Psoas muscle (tissue), 8 donors: ENCODE measurements at regions of chr1 and their contacts with region 1.

Region 1: DNA sequence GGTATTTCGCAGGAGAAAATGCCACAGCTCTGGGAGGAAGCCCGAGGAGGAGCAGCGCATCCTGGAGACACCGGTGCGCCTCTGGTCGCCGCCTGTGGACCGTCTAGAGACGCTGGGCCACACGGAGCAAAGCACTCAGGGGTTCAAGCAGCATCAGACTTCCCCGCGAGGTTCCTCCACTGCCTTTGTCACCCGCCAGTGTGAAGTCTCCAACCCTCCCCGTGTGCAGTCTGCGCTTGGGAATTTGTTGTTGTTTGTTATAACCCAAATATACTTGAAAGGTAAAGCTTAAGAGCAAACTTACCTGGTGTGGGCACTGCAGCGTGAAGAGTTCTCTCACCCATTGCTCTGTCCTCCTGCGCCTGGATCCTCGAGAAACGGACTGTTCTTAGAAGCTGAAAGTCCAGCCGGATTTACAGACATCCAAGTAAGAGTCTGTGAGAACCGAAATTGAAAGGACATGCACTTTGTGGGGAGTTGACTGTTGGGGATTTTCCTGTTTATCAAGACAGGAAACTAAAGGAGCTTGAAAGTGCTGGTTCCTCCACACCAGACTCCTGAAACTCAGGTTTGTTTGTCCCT is at the start of gene GBP4:
- DNase-seq: peak; percentile 35 to 60
- ATAC-seq: peak in 3 of 4 donors; percentile 20 to 54 (median 53)
- H3K4me3 ChIP-seq: peak within 1 kb of the TSS; percentile 63
- H3K27ac ChIP-seq: peak within 1 kb of the TSS; percentile 36
- H3K4me1 ChIP-seq: no peaks in the 10 kb centered on the region
- H3K27me3 ChIP-seq: no peaks in the 10 kb centered on the region
- CTCF ChIP-seq: no peak
- total RNA-seq, gene GBP4: 2.2 to 9.7 (median 3.4) TPM

Region 2: DNA sequence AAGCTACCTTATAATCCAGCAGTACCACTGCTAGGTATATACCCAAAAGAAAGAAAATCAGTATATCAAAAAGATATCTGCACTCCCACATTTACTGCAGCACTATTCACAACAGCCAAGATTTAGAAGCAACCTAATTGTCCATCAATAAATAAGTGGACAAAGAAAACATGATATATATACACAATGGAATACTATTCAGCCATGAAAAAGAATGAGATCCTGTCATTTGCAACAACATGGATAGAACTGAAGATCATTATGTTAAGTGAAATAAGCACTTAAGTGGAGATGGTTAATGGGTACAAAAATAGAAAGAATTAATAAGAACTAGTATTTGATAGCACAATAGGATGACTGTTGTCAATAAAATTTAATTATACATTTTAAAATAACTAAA is 605.2 kb before region 1 on chr1:
- intact Hi-C with region 1: no loop called
- DNase-seq: no peak
- ATAC-seq: no peak
- H3K4me3 ChIP-seq: no peak overlapping the region
- H3K27ac ChIP-seq: no peak overlapping the region
- H3K4me1 ChIP-seq: no peaks in the 10 kb centered on the region
- H3K27me3 ChIP-seq: no peaks in the 10 kb centered on the region
- CTCF ChIP-seq: no peak

Region 3: DNA sequence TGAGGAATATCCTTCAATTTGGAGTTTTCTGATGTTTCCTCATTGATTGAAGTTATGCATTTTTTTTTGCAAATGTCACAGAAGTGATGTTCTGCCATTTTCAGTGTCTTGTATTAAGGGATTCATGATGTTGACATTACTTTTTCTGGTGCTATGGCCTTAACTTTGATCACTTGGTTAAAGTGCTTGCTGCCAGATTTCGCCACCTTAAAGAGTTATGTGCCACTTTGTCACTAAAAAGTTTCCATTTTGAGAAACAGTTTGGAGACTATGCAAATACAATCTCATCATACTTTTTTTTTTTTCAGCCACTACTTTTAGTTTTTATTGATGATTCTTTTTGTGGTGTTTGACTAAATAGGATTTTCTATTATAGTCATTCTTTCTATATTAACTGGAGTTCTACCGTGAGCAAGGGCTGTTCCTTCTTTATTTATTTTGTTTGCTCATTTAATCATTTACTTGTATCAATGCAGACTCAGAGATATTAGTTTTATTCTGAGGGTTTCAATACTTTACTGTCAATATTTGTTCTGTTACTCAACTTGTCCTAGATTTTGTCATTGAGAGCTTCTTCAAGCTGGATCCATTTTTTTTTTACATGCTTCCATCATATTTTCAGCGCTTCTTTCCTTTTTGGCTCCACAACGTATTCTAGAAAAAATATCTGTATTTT is 26.0 kb before region 1 on chr1:
- intact Hi-C with region 1: loop called in 1 of 2 experiments (anchors 1 kb)
- DNase-seq: no peak
- ATAC-seq: no peak
- H3K4me3 ChIP-seq: no peak overlapping the region
- H3K27ac ChIP-seq: no peak overlapping the region
- H3K4me1 ChIP-seq: no peaks in the 10 kb centered on the region
- H3K27me3 ChIP-seq: no peaks in the 10 kb centered on the region
- CTCF ChIP-seq: no peak

Region 4: DNA sequence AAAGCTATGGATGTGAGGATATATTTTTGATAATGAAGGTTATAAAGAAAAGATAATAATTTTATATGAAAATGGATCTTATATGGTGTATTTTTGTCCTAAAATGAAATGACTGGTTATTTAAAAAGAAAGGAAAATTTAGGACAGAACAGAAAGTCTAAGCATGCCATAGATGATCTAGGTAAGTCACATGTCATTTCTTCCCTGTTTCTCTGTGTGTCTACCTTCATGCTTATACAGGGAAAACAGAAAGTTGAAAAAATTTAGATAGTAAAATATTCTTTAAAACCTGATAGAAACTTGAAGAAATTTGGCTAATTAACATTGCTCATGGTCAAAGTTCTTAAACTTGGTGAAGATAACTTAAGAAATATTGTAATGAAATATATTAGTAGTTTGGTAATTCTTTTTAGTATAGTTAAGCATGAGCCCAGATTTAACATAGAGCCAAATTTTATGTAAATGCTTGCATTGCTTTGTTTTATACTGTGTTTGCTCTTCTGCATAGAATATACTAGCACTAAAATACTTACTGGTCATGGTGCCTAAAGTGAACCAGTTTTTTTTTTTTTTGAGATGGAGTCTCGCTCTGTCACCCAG is 12.6 kb after region 1 on chr1:
- intact Hi-C with region 1: no loop called
- DNase-seq: no peak
- ATAC-seq: no peak
- H3K4me3 ChIP-seq: no peak overlapping the region
- H3K27ac ChIP-seq: no peak overlapping the region
- H3K4me1 ChIP-seq: no peaks in the 10 kb centered on the region
- H3K27me3 ChIP-seq: no peaks in the 10 kb centered on the region
- CTCF ChIP-seq: no peak

Region 5: DNA sequence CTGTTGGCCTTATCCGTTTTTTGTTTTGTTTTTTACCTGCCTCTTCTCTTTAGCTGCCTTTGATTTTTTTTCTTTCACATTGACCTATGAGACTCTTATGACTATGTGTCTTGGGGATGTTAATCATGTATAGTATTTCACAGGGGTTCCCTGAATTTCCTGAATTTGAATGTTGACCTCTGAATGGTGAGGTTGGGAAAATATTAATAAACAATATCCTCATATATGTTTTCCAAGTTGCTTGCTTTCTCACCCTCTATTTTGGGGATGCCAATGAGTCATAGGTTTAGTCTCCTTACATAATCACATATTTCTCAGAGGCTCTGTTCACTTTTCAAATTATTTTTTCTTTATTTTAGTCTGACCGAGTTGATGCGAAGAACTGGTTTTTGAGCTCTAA is 44.5 kb after region 1 on chr1:
- intact Hi-C with region 1: no loop called
- DNase-seq: no peak
- ATAC-seq: no peak
- H3K4me3 ChIP-seq: no peak overlapping the region
- H3K27ac ChIP-seq: no peak overlapping the region
- H3K4me1 ChIP-seq: no peaks in the 10 kb centered on the region
- H3K27me3 ChIP-seq: no peaks in the 10 kb centered on the region
- CTCF ChIP-seq: no peak

Region 6: GRCh38 chr1:89358287-89358893 is 159.8 kb after region 1 on chr1:
- intact Hi-C with region 1: loop called in 1 of 2 experiments (anchors 2 kb)
- DNase-seq: peak; percentile 66 to 77
- ATAC-seq: peak; percentile 53 to 90 (median 78)
- H3K4me3 ChIP-seq: no peak overlapping the region
- H3K27ac ChIP-seq: no peak overlapping the region
- H3K4me1 ChIP-seq: no peaks in the 10 kb centered on the region
- H3K27me3 ChIP-seq: no peaks in the 10 kb centered on the region
- CTCF ChIP-seq: peak; percentile 82